AG04449 (cell line): ENCODE measurements at regions of chr14 and their contacts with region 1.

Region 1: DNA sequence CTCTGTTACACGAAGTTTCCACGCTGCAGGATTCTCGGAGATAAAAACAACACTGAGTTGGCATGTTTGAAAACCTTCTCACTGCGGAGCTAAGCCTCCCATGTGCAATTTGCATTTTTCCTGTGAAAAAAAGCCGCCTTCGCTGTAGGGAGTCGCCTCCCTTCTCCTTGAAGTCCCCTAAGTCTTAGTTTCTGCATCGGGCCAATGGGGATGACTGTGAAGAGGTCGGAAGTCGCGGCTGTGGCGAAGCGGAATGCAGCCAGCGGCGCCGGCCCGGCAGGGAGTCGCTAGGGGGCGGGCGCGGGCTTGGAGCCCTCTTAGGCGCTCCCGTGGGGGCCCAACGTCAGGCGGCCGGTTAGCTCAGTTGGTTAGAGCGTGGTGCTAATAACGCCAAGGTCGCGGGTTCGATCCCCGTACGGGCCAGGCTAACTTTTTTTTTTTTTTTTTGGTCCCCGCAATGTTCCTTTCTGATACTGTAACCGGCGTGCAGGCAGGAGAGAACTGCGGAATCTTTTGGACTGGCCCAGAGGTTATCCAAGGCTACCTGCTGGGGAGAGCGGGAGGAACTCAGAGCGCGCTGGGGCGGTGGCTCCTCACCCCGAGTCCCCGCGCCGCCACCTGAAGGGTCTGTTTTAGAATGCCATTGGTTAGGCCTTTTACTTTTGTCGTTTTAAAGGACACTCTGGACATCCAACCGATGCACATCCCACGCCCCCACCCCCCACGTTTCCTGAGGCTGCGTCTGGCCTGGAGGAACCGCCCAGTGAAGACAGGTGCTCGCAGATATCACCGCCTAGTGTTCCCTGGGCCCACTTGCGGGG is 2.6 kb upstream of the ZNF839 start:
- DNase-seq: no peak
- H3K4me3 ChIP-seq: peak overlapping the region; percentile 64
- CTCF ChIP-seq: peak; percentile 94

Region 2: DNA sequence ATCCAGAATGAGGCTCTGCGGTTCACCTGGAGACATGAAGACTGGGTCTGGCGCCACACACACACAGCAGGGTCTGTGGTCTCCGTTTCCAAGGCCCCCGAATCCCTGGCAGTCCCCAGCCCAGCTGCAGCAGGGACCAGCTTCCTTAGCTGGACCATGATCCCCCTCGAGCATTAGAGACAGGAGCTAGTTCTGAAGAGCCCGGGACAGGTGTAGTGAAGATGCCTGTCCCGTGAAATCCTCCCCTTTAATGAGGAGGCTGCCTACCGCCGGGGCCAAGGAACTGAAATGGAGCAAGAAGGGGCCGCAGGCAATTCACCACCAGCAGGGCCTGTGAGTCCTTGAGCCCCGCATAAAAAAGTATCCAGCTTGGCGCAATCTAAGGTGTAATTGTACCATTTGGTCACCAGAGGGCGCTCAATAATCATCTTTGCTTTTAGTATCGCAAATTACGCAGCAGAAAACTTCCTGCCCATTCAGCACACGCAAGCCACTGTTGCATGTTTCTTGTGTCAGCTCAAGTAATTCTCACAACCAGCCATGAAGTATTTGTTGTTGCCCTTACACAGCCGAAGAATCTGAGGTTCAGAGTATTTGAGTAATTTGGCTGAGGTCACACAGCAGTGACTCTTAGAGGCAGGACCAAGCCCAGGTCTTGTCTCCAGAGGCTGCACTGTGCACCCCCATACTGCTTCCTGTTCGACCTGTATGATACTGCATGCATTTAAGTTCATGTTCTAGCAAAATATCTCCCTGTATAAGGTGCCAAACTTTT is 609.7 kb before region 1 on chr14:
- CTCF ChIA-PET with region 1: interaction called, 10 read pairs
- POLR2A ChIA-PET with region 1: no interaction called
- DNase-seq: peak; percentile 36
- H3K4me3 ChIP-seq: no peak overlapping the region; the same call in 1 of the 2 replicates
- CTCF ChIP-seq: peak; percentile 61

Region 3: DNA sequence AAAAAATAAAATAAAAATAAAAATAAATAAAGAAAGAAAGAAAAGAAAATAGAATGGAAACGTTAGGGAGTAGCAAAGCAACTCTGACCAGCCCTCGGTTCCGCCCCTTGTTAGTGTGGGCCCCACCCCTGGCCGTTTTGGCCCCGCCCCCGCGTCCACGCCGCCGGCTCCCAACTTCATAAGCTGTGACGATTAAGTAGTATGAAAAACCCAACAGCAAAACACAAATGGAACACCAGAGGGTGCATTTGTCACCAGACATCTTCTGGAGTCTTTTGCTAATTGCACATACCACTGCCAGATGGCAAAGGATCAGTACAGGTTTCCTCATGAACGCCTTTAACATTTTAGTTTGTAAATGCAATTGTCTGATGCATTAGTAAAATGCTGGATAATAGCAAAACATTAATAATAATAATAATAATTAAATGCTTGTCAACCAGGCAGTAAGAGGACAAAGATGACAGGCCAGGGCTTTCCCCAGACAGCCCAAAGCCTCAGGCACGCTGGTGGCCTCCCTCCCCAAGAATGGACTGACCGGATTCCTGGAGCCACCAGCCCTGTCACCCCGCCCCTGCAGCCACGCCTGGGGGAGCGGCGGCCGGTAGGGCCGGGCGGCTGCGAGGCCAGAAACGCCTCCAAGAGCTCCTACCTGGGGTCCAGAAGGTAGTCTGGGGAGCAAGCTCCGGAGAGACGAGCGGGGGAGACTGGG is 253.7 kb before region 1 on chr14:
- CTCF ChIA-PET with region 1: interaction called, 40 read pairs
- POLR2A ChIA-PET with region 1: no interaction called
- DNase-seq: peak; percentile 54
- H3K4me3 ChIP-seq: no peak overlapping the region
- CTCF ChIP-seq: peak; percentile 55

Region 4: DNA sequence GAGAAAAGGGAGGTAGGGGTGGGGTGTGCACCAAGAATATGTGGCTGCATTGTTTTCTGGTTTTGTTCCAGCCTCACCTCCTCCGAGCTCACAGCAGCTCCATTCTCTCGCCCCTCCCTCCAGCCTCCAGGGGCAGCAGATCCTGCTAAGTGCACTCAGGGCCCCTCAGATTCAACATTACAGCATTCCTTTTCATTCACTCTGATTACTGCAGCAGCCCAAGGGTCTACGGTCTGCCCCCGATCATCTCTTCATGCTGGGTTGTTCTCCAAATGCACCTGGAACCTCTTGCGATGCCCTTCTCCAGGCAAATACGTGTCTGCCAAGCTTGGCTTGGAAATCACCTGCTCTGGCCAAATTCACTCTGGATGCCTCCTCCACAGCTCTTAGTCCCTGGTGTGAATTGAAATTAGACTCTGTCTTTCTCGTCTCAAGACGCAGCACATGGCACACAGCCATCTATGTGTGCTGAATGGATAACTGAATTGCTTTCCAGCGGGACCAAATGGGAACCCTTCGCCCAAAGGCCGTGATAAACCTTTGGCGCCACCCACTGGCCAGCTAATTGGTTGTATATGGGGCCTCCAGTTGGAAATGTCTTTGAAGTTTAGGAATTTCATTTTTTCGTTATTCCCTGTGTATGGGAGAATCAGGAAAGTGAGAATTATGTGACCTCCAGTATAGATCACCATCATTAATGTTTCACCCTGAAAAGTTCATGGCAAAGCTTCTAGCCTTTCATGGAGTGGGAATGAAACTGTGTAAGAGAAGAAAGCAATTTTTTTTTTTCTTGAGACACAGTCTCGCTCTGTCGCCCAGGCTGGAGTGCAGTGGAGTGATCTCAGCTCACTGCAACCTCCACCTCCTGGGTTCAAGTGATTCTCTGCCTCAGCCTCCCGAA is 220.5 kb before region 1 on chr14:
- CTCF ChIA-PET with region 1: interaction called, 66 read pairs
- POLR2A ChIA-PET with region 1: interaction called, 3 read pairs
- DNase-seq: no peak
- H3K4me3 ChIP-seq: no peak overlapping the region; the same call in 1 of the 2 replicates
- CTCF ChIP-seq: peak; percentile 76

Region 5: GRCh38 chr14:102116361-102117070 is 200.4 kb before region 1 on chr14:
- CTCF ChIA-PET with region 1: no interaction called
- POLR2A ChIA-PET with region 1: no interaction called
- DNase-seq: no peak
- H3K4me3 ChIP-seq: no peak overlapping the region
- CTCF ChIP-seq: no peak

Region 6: DNA sequence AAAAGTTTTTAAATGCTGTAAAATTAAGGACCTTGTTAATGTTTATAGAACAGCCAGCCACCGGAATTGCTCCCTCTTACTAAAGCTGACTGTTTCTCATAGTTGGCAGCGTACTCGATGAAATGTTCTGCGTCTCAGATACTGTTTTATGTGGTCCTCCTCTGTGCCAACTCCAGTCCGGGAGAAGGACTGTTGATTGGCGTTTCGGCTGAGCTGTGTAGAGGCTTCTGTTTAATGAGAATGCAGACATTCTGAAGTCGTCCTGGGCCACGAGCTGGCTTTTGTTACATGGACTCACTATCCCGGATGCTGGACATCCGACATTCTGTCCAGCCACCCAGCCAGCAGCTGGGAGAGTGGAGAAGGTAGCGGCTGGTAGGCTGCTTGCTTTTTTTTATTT is 101.9 kb before region 1 on chr14:
- CTCF ChIA-PET with region 1: interaction called, 13 read pairs
- POLR2A ChIA-PET with region 1: no interaction called
- DNase-seq: no peak
- H3K4me3 ChIP-seq: no peak overlapping the region
- CTCF ChIP-seq: no peak

Region 7: DNA sequence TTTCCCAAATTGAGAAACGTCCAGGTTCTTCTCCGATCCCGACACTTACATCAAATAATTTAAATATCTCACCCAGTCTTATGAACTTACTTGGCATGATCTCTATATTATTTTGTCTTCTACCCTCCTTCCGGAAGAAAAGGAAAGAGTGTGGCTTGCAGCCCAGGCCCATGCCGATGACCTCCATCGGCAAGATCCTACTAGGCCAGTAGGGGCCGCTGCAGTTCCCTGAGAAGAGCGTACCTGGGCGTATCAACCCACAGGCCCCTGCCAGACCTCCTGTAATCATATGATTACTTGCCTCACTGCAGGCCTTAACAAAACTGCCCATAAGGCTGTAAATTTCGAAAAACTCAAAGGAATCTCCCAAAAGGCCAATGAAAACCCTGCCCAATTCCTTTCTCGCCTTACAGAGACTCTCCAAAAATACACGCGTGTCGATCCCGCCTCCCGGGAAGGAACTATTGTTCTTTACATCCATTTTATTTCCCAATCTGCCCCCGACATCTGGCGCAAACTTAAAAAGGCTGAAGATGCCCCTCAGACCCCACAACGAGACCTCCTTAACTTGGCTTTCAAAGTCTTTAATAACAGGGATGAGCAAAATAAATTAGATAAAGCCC is 81.6 kb before region 1 on chr14:
- CTCF ChIA-PET with region 1: interaction called, 113 read pairs
- POLR2A ChIA-PET with region 1: no interaction called
- DNase-seq: peak; percentile 34
- H3K4me3 ChIP-seq: peak overlapping the region; percentile 23
- CTCF ChIP-seq: peak; percentile 83

Region 8: DNA sequence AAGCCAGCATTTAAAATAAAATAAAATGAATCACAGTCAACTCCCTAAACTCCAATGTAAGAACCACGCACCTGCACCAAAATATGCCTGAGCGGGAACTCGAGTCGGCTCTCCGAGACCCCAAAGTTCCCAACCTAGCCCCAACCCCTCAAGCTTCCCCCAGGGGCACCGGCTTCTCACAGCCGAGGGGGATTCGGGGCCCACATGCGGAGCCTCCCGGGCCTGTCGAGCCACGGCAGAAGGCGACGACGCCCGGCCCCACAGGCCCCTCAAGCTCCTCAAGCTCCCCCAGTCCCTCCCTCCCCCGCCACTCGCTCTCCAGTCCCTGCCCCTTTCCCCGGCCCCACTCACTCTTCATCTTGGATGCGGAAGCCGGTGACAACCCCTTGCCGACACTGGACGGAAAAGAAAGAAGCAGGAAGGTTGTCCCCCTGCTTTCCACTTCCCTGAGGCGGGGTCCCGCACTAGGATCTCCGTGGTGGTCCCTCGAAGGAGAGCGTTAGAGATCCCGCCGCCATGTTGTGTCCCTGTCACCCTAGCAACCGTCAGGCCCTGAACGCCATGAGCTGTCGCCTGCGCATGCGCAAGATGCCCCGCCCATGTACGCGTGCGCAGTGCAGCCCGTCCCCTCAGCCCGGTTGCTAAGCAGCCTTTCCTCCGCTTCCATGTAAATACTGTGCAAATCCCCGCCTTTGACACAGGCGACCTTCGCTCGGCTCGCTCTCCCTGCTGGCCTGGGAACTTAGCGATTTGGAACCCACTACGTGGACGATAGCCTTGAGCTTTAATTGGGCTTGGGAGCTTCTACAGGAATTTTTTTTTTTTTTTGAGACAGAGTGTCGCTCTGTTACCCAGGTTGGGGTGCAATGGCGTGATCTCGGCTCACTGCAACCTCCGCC is 12.1 kb before region 1 on chr14 and contains the start of gene MOK:
- CTCF ChIA-PET with region 1: interaction called, 34 read pairs
- POLR2A ChIA-PET with region 1: interaction called, 3 read pairs
- DNase-seq: peak; percentile 70
- H3K4me3 ChIP-seq: peak within 1 kb of the TSS; percentile 84
- CTCF ChIP-seq: no peak